Activated CD8-positive, alpha-beta T cell treated with anti-CD3 and anti-CD28 coated beads for 36 hours (primary cell): ENCODE measurements at regions of chr1 and their contacts with region 1.

Region 1: GRCh38 chr1:6245086-6245868 is 1.3 kb downstream of the HES3 start:
- DNase-seq: peak; percentile 85
- ATAC-seq: peak; percentile 81
- H3K4me3 Mint-ChIP-seq: no peak overlapping the region
- H3K27ac Mint-ChIP-seq: no peak overlapping the region
- H3K4me1 Mint-ChIP-seq: peaks cover 13% of the 10 kb centered on the region
- H3K27me3 Mint-ChIP-seq: peaks cover 57% of the 10 kb centered on the region
- CTCF ChIP-seq: peak; percentile 69

Region 2: DNA sequence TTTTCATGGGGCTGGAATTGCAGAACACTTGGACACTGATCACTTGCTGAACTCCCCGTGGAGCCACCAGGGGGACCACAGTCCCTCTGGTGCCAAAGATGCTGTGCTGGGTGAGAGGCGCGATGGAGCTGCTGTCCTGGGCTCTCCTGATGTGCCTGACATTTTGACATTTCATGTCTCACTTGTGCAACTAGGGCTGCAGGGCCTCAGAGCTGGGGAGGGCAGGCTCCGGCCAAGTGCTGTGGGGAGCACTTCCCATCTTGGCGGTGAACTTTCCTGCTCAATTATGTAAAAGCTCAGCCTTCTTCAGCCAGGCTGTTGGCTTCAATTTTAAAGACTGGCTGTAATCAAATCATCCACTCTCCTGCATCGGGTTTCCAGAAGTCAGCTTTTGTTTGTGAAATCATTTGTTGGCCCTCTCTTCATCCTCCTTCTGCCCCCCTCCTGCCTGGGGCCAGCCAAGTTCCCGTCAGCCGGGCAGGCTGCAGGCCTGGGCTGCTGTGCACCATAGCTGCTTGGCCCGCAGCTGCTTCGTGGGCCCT is 162.8 kb before region 1 on chr1:
- CTCF ChIA-PET with region 1: no interaction called
- POLR2A ChIA-PET with region 1: no interaction called
- intact Hi-C with region 1: no loop called
- DNase-seq: no peak
- ATAC-seq: no peak
- H3K4me3 Mint-ChIP-seq: no peak overlapping the region
- H3K27ac Mint-ChIP-seq: no peak overlapping the region
- H3K4me1 Mint-ChIP-seq: no peaks in the 10 kb centered on the region
- H3K27me3 Mint-ChIP-seq: no peaks in the 10 kb centered on the region
- CTCF ChIP-seq: no peak

Region 3: GRCh38 chr1:6205849-6206519 is 39.3 kb before region 1 on chr1 and contains the start of gene RNF207:
- CTCF ChIA-PET with region 1: interaction called, 14 read pairs
- POLR2A ChIA-PET with region 1: no interaction called
- intact Hi-C with region 1: loop called (anchors 5 kb)
- DNase-seq: peak; percentile 71
- ATAC-seq: peak; percentile 68
- H3K4me3 Mint-ChIP-seq: peak within 1 kb of the TSS; percentile 72
- H3K27ac Mint-ChIP-seq: peak within 1 kb of the TSS; percentile 30
- H3K4me1 Mint-ChIP-seq: peaks cover 17% of the 10 kb centered on the region
- H3K27me3 Mint-ChIP-seq: peaks cover 21% of the 10 kb centered on the region
- CTCF ChIP-seq: no peak
- total RNA-seq, gene RNF207: 4.9 to 9.9 TPM

Region 4: GRCh38 chr1:6343506-6344405 is 98.5 kb after region 1 on chr1:
- CTCF ChIA-PET with region 1: interaction called, 48 read pairs
- POLR2A ChIA-PET with region 1: no interaction called
- intact Hi-C with region 1: loop called (anchors 5 kb)
- DNase-seq: peak; percentile 78
- ATAC-seq: peak; percentile 89
- H3K4me3 Mint-ChIP-seq: no peak overlapping the region
- H3K27ac Mint-ChIP-seq: no peak overlapping the region
- H3K4me1 Mint-ChIP-seq: peaks cover 10% of the 10 kb centered on the region
- H3K27me3 Mint-ChIP-seq: no peaks in the 10 kb centered on the region
- CTCF ChIP-seq: peak; percentile 93

Region 5: GRCh38 chr1:6373961-6374720 is 128.9 kb after region 1 on chr1:
- CTCF ChIA-PET with region 1: no interaction called
- POLR2A ChIA-PET with region 1: no interaction called
- intact Hi-C with region 1: no loop called
- DNase-seq: no peak
- ATAC-seq: no peak
- H3K4me3 Mint-ChIP-seq: no peak overlapping the region
- H3K27ac Mint-ChIP-seq: no peak overlapping the region
- H3K4me1 Mint-ChIP-seq: no peaks in the 10 kb centered on the region
- H3K27me3 Mint-ChIP-seq: no peaks in the 10 kb centered on the region
- CTCF ChIP-seq: no peak

Region 6: GRCh38 chr1:6401673-6402072 is 156.4 kb after region 1 on chr1:
- CTCF ChIA-PET with region 1: interaction called, 83 read pairs
- POLR2A ChIA-PET with region 1: interaction called, 3 read pairs
- intact Hi-C with region 1: loop called (anchors 2 kb)
- DNase-seq: no peak
- ATAC-seq: no peak
- H3K4me3 Mint-ChIP-seq: no peak overlapping the region
- H3K27ac Mint-ChIP-seq: no peak overlapping the region
- H3K4me1 Mint-ChIP-seq: no peaks in the 10 kb centered on the region
- H3K27me3 Mint-ChIP-seq: no peaks in the 10 kb centered on the region
- CTCF ChIP-seq: no peak

Region 7: GRCh38 chr1:6438047-6438525 is 192.8 kb after region 1 on chr1:
- CTCF ChIA-PET with region 1: interaction called, 43 read pairs
- POLR2A ChIA-PET with region 1: no interaction called
- intact Hi-C with region 1: no loop called
- DNase-seq: peak; percentile 82
- ATAC-seq: peak; percentile 75
- H3K4me3 Mint-ChIP-seq: no peak overlapping the region
- H3K27ac Mint-ChIP-seq: no peak overlapping the region
- H3K4me1 Mint-ChIP-seq: peaks cover 4% of the 10 kb centered on the region
- H3K27me3 Mint-ChIP-seq: peaks cover 22% of the 10 kb centered on the region
- CTCF ChIP-seq: peak; percentile 93